Activated T-helper 1 cell treated with anti-CD3 and anti-CD28 coated beads, Interleukin-12 subunit alpha, Interleukin-12 subunit beta, Interleukin-2, Interleukin-4 antibody, amounts not matched to agents 30 ng/mL and 10 ng/mL and 1 ng/mL, durations not matched to agents 14 hours and 24 hours and 36 hours (primary cell): ENCODE measurements at regions of chr10 and their contacts with region 1.

Region 1: GRCh38 chr10:63173468-63174232 is 40.5 kb downstream of the NRBF2 start:
- DNase-seq: no peak
- H3K4me3 Mint-ChIP-seq: peak overlapping the region; percentile 61
- H3K27ac Mint-ChIP-seq: peak overlapping the region; percentile 86
- H3K4me1 Mint-ChIP-seq: peaks cover 78% of the 10 kb centered on the region
- H3K27me3 Mint-ChIP-seq: no peaks in the 10 kb centered on the region

Region 2: GRCh38 chr10:63133056-63133820 is 40.4 kb before region 1 on chr10 and contains the start of gene NRBF2:
- intact Hi-C with region 1: loop called (anchors 2 kb)
- DNase-seq: peak; percentile 97
- H3K4me3 Mint-ChIP-seq: peak within 1 kb of the TSS; percentile 91
- H3K27ac Mint-ChIP-seq: peak within 1 kb of the TSS; percentile 83
- H3K4me1 Mint-ChIP-seq: peaks cover 32% of the 10 kb centered on the region
- H3K27me3 Mint-ChIP-seq: peaks cover 3% of the 10 kb centered on the region
- total RNA-seq, gene NRBF2: 30.0 and 30.8 TPM in 2 replicates

Region 3: GRCh38 chr10:63206997-63207811 is 33.6 kb after region 1 on chr10:
- intact Hi-C with region 1: loop called (anchors 1 kb)
- DNase-seq: no peak
- H3K4me3 Mint-ChIP-seq: peak overlapping the region; percentile 56
- H3K27ac Mint-ChIP-seq: peak overlapping the region; percentile 78
- H3K4me1 Mint-ChIP-seq: peaks cover 66% of the 10 kb centered on the region
- H3K27me3 Mint-ChIP-seq: no peaks in the 10 kb centered on the region

Region 4: GRCh38 chr10:63355682-63356081 is 182.0 kb after region 1 on chr10:
- intact Hi-C with region 1: loop called (anchors 1 kb)
- DNase-seq: no peak
- H3K4me3 Mint-ChIP-seq: no peak overlapping the region
- H3K27ac Mint-ChIP-seq: peak overlapping the region; percentile 54
- H3K4me1 Mint-ChIP-seq: peaks cover 14% of the 10 kb centered on the region
- H3K27me3 Mint-ChIP-seq: no peaks in the 10 kb centered on the region

Region 5: DNA sequence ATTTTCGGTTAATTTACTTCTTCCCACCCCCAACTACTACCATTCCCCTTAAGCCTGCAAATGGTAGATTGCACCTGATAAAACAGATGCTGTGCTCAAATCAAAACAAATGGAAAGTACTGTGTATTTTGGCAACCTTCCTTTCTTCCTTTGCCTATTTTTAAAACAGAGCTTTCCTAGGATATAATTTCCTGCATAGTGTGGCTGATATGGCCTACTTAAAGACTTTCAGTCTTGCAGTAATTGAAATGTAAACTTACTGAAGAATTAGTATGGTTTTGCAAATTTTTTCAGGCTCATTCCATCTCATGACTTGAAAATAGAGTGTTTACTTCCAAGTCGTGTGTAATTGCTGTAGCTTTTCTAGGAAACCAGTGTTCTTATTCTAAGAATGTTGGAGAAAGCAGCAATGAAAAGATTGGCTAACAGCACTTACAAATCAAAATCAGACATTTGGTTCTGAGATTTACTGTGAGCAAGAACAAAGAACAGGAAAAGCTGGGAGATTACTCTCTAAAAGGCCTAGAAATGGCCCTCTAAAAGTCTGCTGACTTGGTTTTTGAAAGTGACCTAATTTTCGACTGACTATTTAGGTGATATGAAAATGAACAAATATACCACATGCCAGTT is 399.5 kb after region 1 on chr10:
- intact Hi-C with region 1: loop called (anchors 5 kb)
- DNase-seq: no peak
- H3K4me3 Mint-ChIP-seq: peak overlapping the region; percentile 15
- H3K27ac Mint-ChIP-seq: peak overlapping the region; percentile 72
- H3K4me1 Mint-ChIP-seq: peaks cover 20% of the 10 kb centered on the region
- H3K27me3 Mint-ChIP-seq: no peaks in the 10 kb centered on the region